A673 (cell line): ENCODE measurements at regions of chr1 and their contacts with region 1.

Region 1: GRCh38 chr1:29415156-29415830 is 179.0 kb downstream of the PTPRU start:
- DNase-seq: peak; percentile 15
- H3K4me3 ChIP-seq: no peak overlapping the region
- H3K27ac ChIP-seq: no peak overlapping the region
- H3K4me1 ChIP-seq: no peaks in the 10 kb centered on the region
- H3K27me3 ChIP-seq: no peaks in the 10 kb centered on the region
- CTCF ChIP-seq: 0 out of 2 replicates have a peak, but pooled peaks have one; percentile 17

Region 2: DNA sequence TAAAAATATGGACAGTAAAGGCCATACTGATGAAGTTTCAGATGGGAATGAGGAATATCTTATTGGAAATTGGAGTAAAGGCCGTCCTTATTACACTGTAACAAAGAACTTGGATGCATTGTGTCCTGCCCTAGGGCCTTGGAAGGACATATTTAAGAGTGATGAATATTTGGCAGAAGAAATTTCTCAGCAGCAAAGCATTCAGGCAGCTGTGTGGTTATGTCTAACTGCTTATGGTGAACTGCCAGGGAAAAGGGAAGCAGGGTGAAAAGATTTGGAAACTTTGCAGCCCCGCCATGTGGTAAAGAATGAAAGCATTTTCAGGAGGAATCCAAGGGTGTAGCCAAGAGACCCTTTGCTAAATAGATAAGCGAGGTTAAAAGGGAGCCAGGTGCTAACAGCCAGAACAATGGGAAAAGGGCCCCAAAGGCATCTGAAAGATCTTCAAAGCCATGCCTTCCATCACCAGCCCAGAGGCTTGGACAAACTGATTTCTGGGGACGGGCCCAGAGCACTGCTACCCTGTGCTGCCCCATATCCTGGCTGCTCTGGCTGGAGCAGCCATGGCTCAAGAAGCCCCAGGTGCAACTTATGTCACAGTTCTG is 21.0 kb after region 1 on chr1:
- CTCF ChIA-PET with region 1: no interaction called
- POLR2A ChIA-PET with region 1: no interaction called
- intact Hi-C with region 1: no loop called
- DNase-seq: no peak
- H3K4me3 ChIP-seq: no peak overlapping the region
- H3K27ac ChIP-seq: no peak overlapping the region
- H3K4me1 ChIP-seq: no peaks in the 10 kb centered on the region
- H3K27me3 ChIP-seq: peaks cover 36% of the 10 kb centered on the region
- CTCF ChIP-seq: no peak

Region 3: GRCh38 chr1:29563571-29563970 is 148.3 kb after region 1 on chr1:
- CTCF ChIA-PET with region 1: no interaction called
- POLR2A ChIA-PET with region 1: interaction called, 22 read pairs
- intact Hi-C with region 1: no loop called
- DNase-seq: peak; percentile 35
- H3K4me3 ChIP-seq: no peak overlapping the region
- H3K27ac ChIP-seq: no peak overlapping the region
- H3K4me1 ChIP-seq: no peaks in the 10 kb centered on the region
- H3K27me3 ChIP-seq: no peaks in the 10 kb centered on the region
- CTCF ChIP-seq: no peak

Region 4: DNA sequence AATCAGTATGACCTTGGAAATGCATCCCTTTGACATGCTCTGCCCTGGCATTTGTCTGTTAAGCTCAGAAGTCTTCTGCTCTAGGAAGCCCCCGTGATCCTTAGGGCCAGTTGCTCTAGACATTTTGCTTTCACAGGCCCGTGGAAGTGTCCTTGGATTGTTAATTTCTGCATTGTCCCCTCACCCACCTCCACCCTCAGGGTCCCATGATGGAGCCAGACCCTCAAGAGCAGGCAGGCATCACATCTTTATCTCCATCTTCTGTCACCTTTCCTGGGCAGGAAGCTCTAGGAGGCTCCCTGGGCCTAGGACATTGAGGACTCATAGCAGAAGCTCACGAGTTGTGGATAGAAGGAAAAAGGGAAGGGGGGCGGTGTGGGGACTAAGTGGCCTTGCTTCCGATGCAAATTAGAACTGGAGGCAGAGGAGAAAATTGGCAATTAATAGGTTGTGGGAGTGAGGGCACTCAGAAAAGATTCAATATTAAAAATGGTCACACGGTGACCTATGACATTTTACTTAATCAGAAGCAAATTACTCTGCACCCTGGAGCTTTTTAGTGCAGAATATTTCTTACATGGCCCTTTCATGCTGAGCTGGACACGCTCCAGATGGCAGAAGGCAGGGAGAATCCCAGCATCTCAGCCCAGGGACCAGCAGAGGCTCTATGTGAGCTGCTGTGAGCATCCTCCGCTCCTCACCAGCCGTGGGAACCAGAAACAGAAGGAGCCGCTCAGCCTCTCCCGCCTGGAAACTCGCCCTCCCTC is 1123.1 kb after region 1 on chr1:
- CTCF ChIA-PET with region 1: interaction called, 11 read pairs
- POLR2A ChIA-PET with region 1: no interaction called
- intact Hi-C with region 1: no loop called
- DNase-seq: no peak
- H3K4me3 ChIP-seq: no peak overlapping the region
- H3K27ac ChIP-seq: no peak overlapping the region
- H3K4me1 ChIP-seq: no peaks in the 10 kb centered on the region
- H3K27me3 ChIP-seq: no peaks in the 10 kb centered on the region
- CTCF ChIP-seq: no peak